ENCODE measurements at regions of chr11 and their contacts with region 1.

Region 1: GRCh38 chr11:35391922-35392813 is 27.2 kb downstream of the SLC1A2 start:
- DNase-seq: peak; percentile 91

Region 2: GRCh38 chr11:34926101-34926830 is 465.9 kb before region 1 on chr11:
- intact Hi-C with region 1: loop called (anchors 2 kb)
- DNase-seq: no peak

Region 3: DNA sequence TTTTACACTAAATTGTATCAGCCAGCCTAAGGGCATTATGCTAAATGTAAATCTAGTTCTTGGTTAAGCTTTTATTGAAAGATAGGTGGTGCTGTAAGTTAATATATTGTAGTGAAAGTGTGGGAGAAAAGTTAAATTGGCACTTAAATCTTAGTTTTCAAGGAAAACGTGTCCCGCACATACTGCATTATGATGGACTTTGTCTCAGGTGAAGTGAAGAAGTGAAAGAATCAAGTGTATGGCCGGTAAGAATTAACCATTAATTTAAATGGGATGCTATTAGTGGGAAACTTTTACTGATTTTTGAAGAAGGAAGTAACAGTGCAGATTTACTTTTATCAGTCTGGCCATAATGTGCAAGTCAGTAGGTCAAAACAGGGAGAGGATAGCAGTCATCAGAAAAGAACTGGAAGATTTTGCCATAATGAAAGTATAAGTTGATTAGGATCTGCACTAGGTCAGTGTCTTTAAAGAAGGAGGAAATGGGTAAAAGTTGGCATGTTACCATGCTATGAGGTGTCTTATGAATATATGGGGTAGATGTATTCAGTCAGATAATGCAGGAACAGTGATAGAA is 394.1 kb before region 1 on chr11:
- intact Hi-C with region 1: loop called (anchors 5 kb)
- DNase-seq: no peak

Region 4: GRCh38 chr11:35237860-35238715 is 154.1 kb before region 1 on chr11:
- intact Hi-C with region 1: loop called (anchors 10 kb)
- DNase-seq: no peak

Region 5: GRCh38 chr11:35305670-35306382 is 86.3 kb before region 1 on chr11:
- intact Hi-C with region 1: loop called (anchors 5 kb)
- DNase-seq: no peak

Measured in cardiac septum (tissue), 1 donor.